Lower leg skin (tissue), 4 donors: ENCODE measurements at regions of chr3 and their contacts with region 1.

Region 1: GRCh38 chr3:14841836-14842615 is 23.3 kb downstream of the FGD5 start:
- DNase-seq: no peak
- H3K4me3 ChIP-seq: no peak overlapping the region
- CTCF ChIP-seq: no peak
- POLR2A ChIP-seq: no peak

Region 2: DNA sequence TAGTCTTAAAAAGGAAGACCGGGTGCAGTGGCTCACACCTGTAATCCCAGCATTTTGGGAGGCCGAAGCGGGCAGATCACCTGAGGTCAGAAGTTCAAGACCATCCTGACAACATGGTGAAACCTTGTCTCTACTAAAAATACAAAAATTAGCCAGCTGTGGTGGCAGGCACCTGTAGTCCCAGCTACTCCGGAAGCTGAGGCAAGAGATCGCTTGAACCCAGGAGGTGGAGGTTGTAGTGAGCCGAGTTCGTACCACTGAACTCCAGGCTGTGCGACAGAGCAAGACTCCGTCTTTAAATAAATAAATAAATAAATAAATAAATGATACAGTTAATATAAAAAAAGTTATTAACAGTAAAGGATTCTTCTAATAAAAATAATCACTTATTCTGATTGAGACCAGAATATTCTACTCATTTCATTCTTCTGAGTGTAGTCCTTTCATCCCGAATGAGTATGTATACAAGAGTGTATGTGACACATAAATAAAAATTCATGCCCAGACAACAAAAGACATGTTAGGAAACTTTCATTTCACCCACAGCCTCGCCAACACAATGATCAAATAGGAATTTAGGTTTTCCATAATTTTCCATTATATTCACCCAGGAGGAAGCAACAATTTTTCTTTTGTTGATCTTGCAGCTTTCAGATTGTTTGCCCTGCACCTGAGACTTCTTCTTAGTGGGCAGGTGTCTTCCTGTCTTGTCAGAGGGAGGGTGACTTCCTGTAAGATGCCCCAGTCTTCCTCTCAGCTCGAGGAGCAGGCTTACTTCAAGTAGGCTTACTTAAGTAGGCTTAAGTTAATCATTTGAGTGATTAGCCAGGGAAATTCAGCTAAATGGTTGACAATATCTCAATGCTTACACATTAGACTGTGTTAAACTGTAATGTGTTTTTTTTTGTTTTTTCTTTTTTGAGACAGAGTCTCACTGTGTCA is 1414.1 kb before region 1 on chr3:
- intact Hi-C with region 1: loop called (anchors 5 kb)
- DNase-seq: no peak
- H3K4me3 ChIP-seq: no peak overlapping the region
- CTCF ChIP-seq: no peak
- POLR2A ChIP-seq: no peak

Region 3: DNA sequence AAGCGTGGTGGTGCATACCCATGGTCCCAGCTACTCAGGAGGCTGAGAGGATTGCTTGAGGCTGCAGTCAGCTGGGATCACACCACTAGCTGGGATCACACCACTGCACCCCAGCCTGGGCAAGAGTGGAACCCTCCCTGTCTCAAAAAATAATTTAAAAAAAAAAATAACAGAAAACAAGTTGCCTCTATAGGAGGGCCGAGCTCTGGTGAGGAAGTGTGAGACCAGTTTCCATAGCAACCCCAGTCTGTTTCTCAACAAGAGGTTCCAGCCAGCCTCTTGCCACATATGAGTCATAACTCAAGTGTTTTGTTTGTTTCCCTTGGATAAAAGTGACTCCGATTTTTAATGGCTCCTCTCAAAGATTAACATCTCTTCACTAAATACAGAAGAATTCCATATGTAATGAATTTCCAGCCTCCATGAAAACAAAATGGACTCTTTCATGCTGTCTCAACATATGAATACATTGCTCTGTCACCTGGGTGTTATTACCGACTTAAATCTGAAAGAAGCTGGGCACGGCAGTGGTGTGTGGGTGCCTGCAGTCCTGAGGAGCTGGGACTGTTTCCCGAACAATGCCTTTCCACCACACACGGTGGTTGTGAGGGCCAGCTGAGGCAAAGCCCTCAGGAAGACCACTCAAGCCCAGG is 697.5 kb before region 1 on chr3:
- intact Hi-C with region 1: no loop called
- DNase-seq: peak; percentile 86 to 92
- H3K4me3 ChIP-seq: no peak overlapping the region
- CTCF ChIP-seq: no peak
- POLR2A ChIP-seq: no peak

Region 4: DNA sequence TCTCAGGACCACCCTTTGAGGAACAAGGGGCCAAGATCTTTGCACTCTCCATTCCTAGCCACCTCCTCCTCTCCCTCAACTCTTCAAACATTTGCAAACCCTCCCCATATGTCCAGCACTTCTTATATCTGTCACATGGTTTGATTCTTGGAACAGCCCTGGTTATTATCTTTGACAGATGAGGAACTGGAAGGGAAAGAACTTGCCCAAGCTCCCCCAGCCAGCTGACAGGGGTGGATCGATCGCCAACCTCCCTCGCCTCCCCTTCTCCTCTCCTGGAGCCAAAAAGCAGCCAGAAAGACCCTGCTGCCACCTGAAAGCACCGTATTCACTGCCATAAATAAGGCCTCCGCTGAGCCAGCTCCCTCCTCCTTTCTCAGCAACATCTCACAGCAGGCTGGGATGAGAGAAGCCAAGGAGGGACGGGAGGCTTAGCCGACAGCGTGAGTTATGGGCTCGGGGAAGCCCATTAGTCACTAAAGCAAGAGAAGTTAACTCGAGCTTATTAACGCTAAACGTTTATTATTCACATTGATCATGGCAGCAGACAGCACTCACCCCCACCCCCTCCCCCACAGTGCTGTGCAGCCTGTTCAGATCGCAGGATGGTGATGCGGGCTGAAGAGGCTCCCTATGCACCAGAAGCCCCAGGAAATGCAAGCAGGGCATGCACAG is 45.5 kb before region 1 on chr3:
- intact Hi-C with region 1: loop called (anchors 1 kb)
- DNase-seq: no peak
- H3K4me3 ChIP-seq: no peak overlapping the region
- CTCF ChIP-seq: no peak
- POLR2A ChIP-seq: no peak

Region 5: DNA sequence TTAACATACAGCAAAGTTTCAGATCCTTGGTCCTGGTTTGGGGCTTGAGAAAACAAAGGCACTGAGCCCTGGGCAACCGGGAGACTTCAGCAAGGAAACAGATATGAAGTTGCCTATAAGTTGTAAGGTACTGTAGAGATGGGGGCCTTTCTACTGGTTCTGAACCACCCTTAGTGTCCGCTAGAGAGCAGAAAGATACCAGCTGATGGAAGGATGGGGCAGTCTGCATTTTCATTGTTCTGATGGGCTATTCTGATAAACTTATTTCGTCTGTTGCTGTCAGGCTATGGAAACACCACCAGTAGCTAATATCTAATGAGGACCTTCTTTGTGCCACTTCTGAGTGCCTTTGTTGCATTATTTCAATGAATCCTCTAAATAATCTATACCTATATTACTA is 15.5 kb after region 1 on chr3:
- intact Hi-C with region 1: no loop called
- DNase-seq: no peak
- H3K4me3 ChIP-seq: no peak overlapping the region
- CTCF ChIP-seq: no peak
- POLR2A ChIP-seq: no peak

Region 6: GRCh38 chr3:14943042-14943441 is 101.0 kb after region 1 on chr3:
- intact Hi-C with region 1: no loop called
- DNase-seq: no peak
- H3K4me3 ChIP-seq: no peak overlapping the region
- CTCF ChIP-seq: no peak
- POLR2A ChIP-seq: no peak